ENCODE measurements at regions of chr13 and their contacts with region 1.

Region 1: GRCh38 chr13:110250258-110250891 is 56.6 kb downstream of the COL4A1 start:
- DNase-seq: no peak
- ATAC-seq: no peak
- H3K4me3 ChIP-seq: no peak overlapping the region
- H3K27ac ChIP-seq: no peak overlapping the region
- H3K4me1 ChIP-seq: no peaks in the 10 kb centered on the region
- H3K27me3 ChIP-seq: no peaks in the 10 kb centered on the region
- CTCF ChIP-seq: no peak
- POLR2A ChIP-seq: no peak
- RAD21 ChIP-seq: no peak

Region 2: GRCh38 chr13:110239280-110240125 is 10.9 kb before region 1 on chr13:
- CTCF ChIA-PET with region 1: interaction called, 12 read pairs
- POLR2A ChIA-PET with region 1: no interaction called
- RAD21 ChIA-PET with region 1: no interaction called
- intact Hi-C with region 1: no loop called
- DNase-seq: no peak
- ATAC-seq: no peak
- H3K4me3 ChIP-seq: no peak overlapping the region
- H3K27ac ChIP-seq: no peak overlapping the region
- H3K4me1 ChIP-seq: no peaks in the 10 kb centered on the region
- H3K27me3 ChIP-seq: no peaks in the 10 kb centered on the region
- CTCF ChIP-seq: no peak
- POLR2A ChIP-seq: no peak
- RAD21 ChIP-seq: peak; percentile 27; the same call in 1 of the 2 replicates

Region 3: GRCh38 chr13:110298505-110299282 is 48.3 kb after region 1 on chr13:
- CTCF ChIA-PET with region 1: no interaction called
- POLR2A ChIA-PET with region 1: no interaction called
- RAD21 ChIA-PET with region 1: no interaction called
- intact Hi-C with region 1: no loop called
- DNase-seq: no peak
- ATAC-seq: no peak
- H3K4me3 ChIP-seq: no peak overlapping the region
- H3K27ac ChIP-seq: no peak overlapping the region
- H3K4me1 ChIP-seq: no peaks in the 10 kb centered on the region
- H3K27me3 ChIP-seq: peaks cover 76% of the 10 kb centered on the region
- CTCF ChIP-seq: no peak
- POLR2A ChIP-seq: no peak
- RAD21 ChIP-seq: no peak